ENCODE measurements at regions of chr7 and their contacts with region 1.

Region 1: GRCh38 chr7:129468087-129468486 is 33.9 kb downstream of the STRIP2 start:
- DNase-seq: no peak
- H3K4me3 ChIP-seq: no peak overlapping the region
- H3K27ac ChIP-seq: no peak overlapping the region
- H3K4me1 ChIP-seq: no peaks in the 10 kb centered on the region
- H3K27me3 ChIP-seq: no peaks in the 10 kb centered on the region
- CTCF ChIP-seq: no peak
- POLR2A ChIP-seq: no peak

Region 2: DNA sequence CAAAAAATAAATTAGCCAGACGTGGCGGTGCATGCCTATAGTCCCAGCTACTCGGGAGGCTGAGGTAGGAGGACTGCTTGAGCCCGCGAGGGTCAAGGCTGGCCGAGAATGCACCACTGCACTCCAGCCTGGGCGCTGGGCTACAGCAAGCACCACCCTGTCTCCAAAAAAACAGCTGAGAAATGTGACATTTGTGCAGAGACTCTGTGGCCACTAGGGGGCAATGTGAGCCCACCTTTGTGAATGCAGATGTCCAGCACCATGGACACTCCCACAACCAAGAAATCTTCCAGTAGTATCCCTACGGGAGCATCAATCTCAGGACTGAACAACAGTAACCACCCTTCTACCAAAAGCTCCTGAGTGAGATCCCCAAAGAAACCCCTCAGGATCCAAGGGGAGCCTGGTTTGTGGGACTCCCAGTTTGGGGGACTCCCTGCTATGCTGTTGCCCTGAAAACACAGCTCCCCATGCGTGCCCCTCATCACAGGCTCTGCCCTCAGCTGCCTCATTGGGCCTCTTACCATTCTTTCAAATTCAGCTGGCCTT is 249.5 kb before region 1 on chr7:
- intact Hi-C with region 1: loop called in 1 of 2 experiments (anchors 10 kb)
- DNase-seq: peak; percentile 83 to 96 (median 90)
- H3K4me3 ChIP-seq: no peak overlapping the region
- H3K27ac ChIP-seq: no peak overlapping the region
- H3K4me1 ChIP-seq: no peaks in the 10 kb centered on the region
- H3K27me3 ChIP-seq: no peaks in the 10 kb centered on the region
- CTCF ChIP-seq: peak; percentile 90 to 97 (median 94)
- POLR2A ChIP-seq: no peak

Region 3: GRCh38 chr7:129332284-129333035 is 135.6 kb before region 1 on chr7:
- intact Hi-C with region 1: no loop called
- DNase-seq: no peak
- H3K4me3 ChIP-seq: no peak overlapping the region
- H3K27ac ChIP-seq: no peak overlapping the region
- H3K4me1 ChIP-seq: peaks cover 0 to 7% of the 10 kb centered on the region in 2 donors
- H3K27me3 ChIP-seq: no peaks in the 10 kb centered on the region
- CTCF ChIP-seq: no peak
- POLR2A ChIP-seq: no peak

Region 4: DNA sequence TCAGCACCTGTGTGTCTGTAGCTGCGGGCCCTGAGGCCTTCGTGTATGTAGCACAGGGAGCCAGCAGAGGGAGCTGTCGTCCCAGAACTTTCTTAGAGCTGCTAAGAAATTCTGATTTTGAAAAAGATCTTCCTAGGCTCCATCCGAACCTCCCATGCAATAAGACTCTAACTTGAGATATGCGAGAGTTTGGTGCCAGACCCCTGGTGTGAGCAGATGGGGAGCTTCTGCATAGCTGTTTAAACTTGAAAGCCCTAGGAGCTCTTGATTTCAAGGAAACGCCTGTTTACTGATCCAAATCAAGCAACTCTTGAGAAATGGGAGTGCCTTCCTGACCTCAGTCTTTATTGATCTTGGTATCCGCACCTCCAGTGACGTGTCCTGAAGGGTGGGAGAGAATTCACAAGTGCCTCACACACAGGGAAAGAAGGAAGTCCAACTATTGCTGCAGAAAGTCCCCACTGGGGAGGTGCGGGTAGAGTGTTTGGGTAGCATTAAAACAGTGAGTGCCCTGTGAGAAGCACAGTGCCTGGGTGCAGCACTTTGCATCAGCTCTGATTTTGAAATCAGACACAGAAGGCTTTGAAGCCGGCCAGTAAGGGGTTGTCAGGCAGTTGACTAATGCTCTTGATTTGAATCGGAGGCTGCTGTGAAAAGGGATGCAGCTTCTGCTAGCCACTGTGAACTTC is 100.2 kb before region 1 on chr7:
- intact Hi-C with region 1: loop called (anchors 5 kb)
- DNase-seq: peak; percentile 64 to 91 (median 78)
- H3K4me3 ChIP-seq: peak overlapping the region in 1 of 4 donors; percentile 17
- H3K27ac ChIP-seq: no peak overlapping the region
- H3K4me1 ChIP-seq: peaks cover 0 to 6% of the 10 kb centered on the region in 2 donors
- H3K27me3 ChIP-seq: no peaks in the 10 kb centered on the region
- CTCF ChIP-seq: peak; percentile 71 to 87 (median 84)
- POLR2A ChIP-seq: no peak

Region 5: GRCh38 chr7:129644634-129645230 is 176.6 kb after region 1 on chr7:
- intact Hi-C with region 1: loop called in 1 of 2 experiments (anchors 10 kb)
- DNase-seq: no peak
- H3K4me3 ChIP-seq: no peak overlapping the region
- H3K27ac ChIP-seq: no peak overlapping the region
- H3K4me1 ChIP-seq: peaks cover 3 to 13% of the 10 kb centered on the region in 2 donors
- H3K27me3 ChIP-seq: no peaks in the 10 kb centered on the region
- CTCF ChIP-seq: peak; percentile 26 to 55 (median 54)
- POLR2A ChIP-seq: no peak